ENCODE measurements at regions of chr16 and their contacts with region 1.

Region 1: GRCh38 chr16:78257376-78257728 is 157.9 kb downstream of the WWOX start:
- DNase-seq: no peak
- ATAC-seq: no peak; the same call in 2 of the 3 replicates
- H3K4me3 ChIP-seq: no peak overlapping the region
- H3K27ac ChIP-seq: no peak overlapping the region
- H3K4me1 ChIP-seq: peaks cover 43% of the 10 kb centered on the region
- H3K27me3 ChIP-seq: no peaks in the 10 kb centered on the region
- CTCF ChIP-seq: no peak
- EP300 ChIP-seq: no peak
- POLR2A ChIP-seq: no peak
- RAD21 ChIP-seq: no peak

Region 2: GRCh38 chr16:78277321-78278055 is 20.1 kb after region 1 on chr16:
- CTCF ChIA-PET with region 1: no interaction called
- POLR2A ChIA-PET with region 1: no interaction called
- in situ Hi-C with region 1: no loop called
- intact Hi-C with region 1: no loop called
- DNase-seq: no peak
- ATAC-seq: no peak
- H3K4me3 ChIP-seq: no peak overlapping the region
- H3K27ac ChIP-seq: no peak overlapping the region
- H3K4me1 ChIP-seq: no peaks in the 10 kb centered on the region
- H3K27me3 ChIP-seq: no peaks in the 10 kb centered on the region
- CTCF ChIP-seq: no peak
- EP300 ChIP-seq: no peak
- POLR2A ChIP-seq: no peak
- RAD21 ChIP-seq: no peak

Region 3: GRCh38 chr16:78375055-78375679 is 117.8 kb after region 1 on chr16:
- CTCF ChIA-PET with region 1: no interaction called
- POLR2A ChIA-PET with region 1: no interaction called
- in situ Hi-C with region 1: no loop called
- intact Hi-C with region 1: loop called (anchors 10 kb)
- DNase-seq: no peak
- ATAC-seq: no peak
- H3K4me3 ChIP-seq: no peak overlapping the region
- H3K27ac ChIP-seq: no peak overlapping the region
- H3K4me1 ChIP-seq: no peaks in the 10 kb centered on the region
- H3K27me3 ChIP-seq: no peaks in the 10 kb centered on the region
- CTCF ChIP-seq: no peak
- EP300 ChIP-seq: no peak
- POLR2A ChIP-seq: no peak
- RAD21 ChIP-seq: no peak